HepG2 (cell line): ENCODE measurements at regions of chr3 and their contacts with region 1.

Region 1: DNA sequence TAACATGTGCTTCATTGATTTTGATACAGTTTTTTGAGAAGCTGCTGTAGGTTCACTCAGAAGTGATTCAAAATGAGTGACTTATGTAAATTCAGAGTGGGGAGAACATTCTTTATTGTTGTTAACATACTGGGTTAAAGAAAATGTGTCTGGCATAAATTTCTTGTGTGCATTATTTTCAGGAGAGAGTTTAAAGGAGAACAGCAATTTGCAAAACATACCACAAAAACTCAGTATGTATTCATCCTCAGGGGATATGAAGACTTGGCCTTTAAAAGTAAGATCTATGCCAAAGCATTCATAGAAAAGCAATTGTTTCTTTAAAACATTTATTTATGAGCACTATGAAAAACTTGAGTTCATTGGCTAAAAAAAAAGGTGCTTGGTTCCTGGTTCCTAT is 1089.8 kb downstream of the ROBO2 start:
- DNase-seq: no peak
- ATAC-seq: no peak
- H3K4me3 ChIP-seq: no peak overlapping the region
- H3K27ac ChIP-seq: no peak overlapping the region
- H3K4me1 ChIP-seq: no peaks in the 10 kb centered on the region
- H3K27me3 ChIP-seq: no peaks in the 10 kb centered on the region
- CTCF ChIP-seq: no peak
- EP300 ChIP-seq: no peak
- POLR2A ChIP-seq: no peak
- RAD21 ChIP-seq: no peak

Region 2: DNA sequence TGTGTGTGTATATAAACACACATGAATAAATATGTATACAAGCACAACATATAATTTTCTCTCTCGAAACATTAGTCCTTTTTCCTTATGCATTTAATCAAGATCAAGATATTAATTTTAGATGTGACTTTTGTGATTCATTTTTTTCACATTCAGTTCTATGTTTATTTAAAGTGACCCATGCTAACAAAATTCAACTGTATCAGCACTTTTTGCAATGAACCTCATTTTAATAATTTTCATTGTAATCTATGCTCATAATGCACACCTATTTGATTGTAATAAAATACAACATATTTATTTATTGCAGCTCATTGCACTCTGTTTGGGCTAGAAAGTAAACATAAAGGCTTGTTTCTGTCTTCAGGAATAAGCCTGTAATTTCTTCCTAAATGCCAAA is 503.6 kb before region 1 on chr3:
- CTCF ChIA-PET with region 1: no interaction called
- POLR2A ChIA-PET with region 1: no interaction called
- in situ Hi-C with region 1: no loop called
- intact Hi-C with region 1: loop called (anchors 5 kb)
- DNase-seq: no peak
- ATAC-seq: no peak
- H3K4me3 ChIP-seq: no peak overlapping the region
- H3K27ac ChIP-seq: no peak overlapping the region
- H3K4me1 ChIP-seq: no peaks in the 10 kb centered on the region
- H3K27me3 ChIP-seq: no peaks in the 10 kb centered on the region
- CTCF ChIP-seq: no peak
- EP300 ChIP-seq: no peak
- POLR2A ChIP-seq: no peak
- RAD21 ChIP-seq: no peak

Region 3: GRCh38 chr3:78004571-78004970 is 125.1 kb before region 1 on chr3:
- CTCF ChIA-PET with region 1: no interaction called
- POLR2A ChIA-PET with region 1: no interaction called
- in situ Hi-C with region 1: no loop called
- intact Hi-C with region 1: no loop called
- DNase-seq: no peak
- ATAC-seq: no peak
- H3K4me3 ChIP-seq: no peak overlapping the region
- H3K27ac ChIP-seq: no peak overlapping the region
- H3K4me1 ChIP-seq: no peaks in the 10 kb centered on the region
- H3K27me3 ChIP-seq: no peaks in the 10 kb centered on the region
- CTCF ChIP-seq: no peak
- EP300 ChIP-seq: no peak
- POLR2A ChIP-seq: no peak
- RAD21 ChIP-seq: no peak

Region 4: DNA sequence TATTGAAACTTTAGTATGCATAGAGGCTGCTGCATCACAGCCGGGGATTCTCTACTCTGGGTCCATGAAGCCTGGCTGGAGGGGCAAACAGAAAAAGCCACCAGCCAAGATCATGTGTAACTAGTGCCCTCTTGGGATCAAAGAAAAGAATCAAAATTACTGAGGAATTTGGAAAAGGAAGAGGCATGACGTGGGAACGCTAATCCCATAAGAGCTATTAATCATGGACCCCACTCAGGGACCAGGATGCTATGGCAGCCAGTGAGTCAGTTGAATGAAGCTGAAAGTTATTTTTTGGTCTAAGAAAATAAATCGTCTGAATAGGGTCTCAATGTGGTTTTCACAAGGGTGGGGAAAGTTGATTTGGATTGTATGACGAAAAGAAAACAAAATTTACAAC is 75.3 kb after region 1 on chr3:
- CTCF ChIA-PET with region 1: no interaction called
- POLR2A ChIA-PET with region 1: no interaction called
- in situ Hi-C with region 1: no loop called
- intact Hi-C with region 1: no loop called
- DNase-seq: peak; percentile 3
- ATAC-seq: no peak; the same call in 2 of the 3 replicates
- H3K4me3 ChIP-seq: no peak overlapping the region
- H3K27ac ChIP-seq: no peak overlapping the region
- H3K4me1 ChIP-seq: no peaks in the 10 kb centered on the region
- H3K27me3 ChIP-seq: no peaks in the 10 kb centered on the region
- CTCF ChIP-seq: peak; percentile 21
- EP300 ChIP-seq: no peak
- POLR2A ChIP-seq: no peak
- RAD21 ChIP-seq: no peak